AG04450 (cell line): ENCODE measurements at regions of chr6 and their contacts with region 1.

Region 1: GRCh38 chr6:154156135-154156896 is 117.3 kb downstream of the OPRM1 start:
- DNase-seq: no peak
- H3K4me3 ChIP-seq: no peak overlapping the region
- H3K27ac ChIP-seq: no peak overlapping the region
- H3K27me3 ChIP-seq: peaks cover 5% of the 10 kb centered on the region
- CTCF ChIP-seq: peak; percentile 79

Region 2: GRCh38 chr6:154039231-154039842 is 117.0 kb before region 1 on chr6 and contains the start of gene OPRM1:
- CTCF ChIA-PET with region 1: no interaction called
- POLR2A ChIA-PET with region 1: no interaction called
- DNase-seq: no peak
- H3K4me3 ChIP-seq: no peak within 1 kb of the TSS
- H3K27ac ChIP-seq: no peak within 1 kb of the TSS
- H3K27me3 ChIP-seq: no peaks in the 10 kb centered on the region
- CTCF ChIP-seq: no peak
- polyA plus RNA-seq, gene OPRM1: not detected in 2 replicates

Region 3: GRCh38 chr6:154276810-154277628 is 120.7 kb after region 1 on chr6:
- CTCF ChIA-PET with region 1: interaction called, 59 read pairs
- POLR2A ChIA-PET with region 1: no interaction called
- DNase-seq: no peak
- H3K4me3 ChIP-seq: no peak overlapping the region
- H3K27ac ChIP-seq: no peak overlapping the region
- H3K27me3 ChIP-seq: no peaks in the 10 kb centered on the region
- CTCF ChIP-seq: peak; percentile 60

Region 4: GRCh38 chr6:154370545-154370944 is 214.2 kb after region 1 on chr6:
- CTCF ChIA-PET with region 1: interaction called, 44 read pairs
- POLR2A ChIA-PET with region 1: no interaction called
- DNase-seq: no peak
- H3K4me3 ChIP-seq: no peak overlapping the region
- H3K27ac ChIP-seq: no peak overlapping the region
- H3K27me3 ChIP-seq: no peaks in the 10 kb centered on the region
- CTCF ChIP-seq: peak; percentile 53

Region 5: GRCh38 chr6:154410619-154411072 is 254.3 kb after region 1 on chr6:
- CTCF ChIA-PET with region 1: interaction called, 11 read pairs
- POLR2A ChIA-PET with region 1: no interaction called
- DNase-seq: peak; percentile 91
- H3K4me3 ChIP-seq: no peak overlapping the region; the same call in 1 of the 2 replicates
- H3K27ac ChIP-seq: peak overlapping the region; percentile 96
- H3K27me3 ChIP-seq: no peaks in the 10 kb centered on the region
- CTCF ChIP-seq: no peak